PC-9 (cell line): ENCODE measurements at regions of chr9 and their contacts with region 1.

Region 1: DNA sequence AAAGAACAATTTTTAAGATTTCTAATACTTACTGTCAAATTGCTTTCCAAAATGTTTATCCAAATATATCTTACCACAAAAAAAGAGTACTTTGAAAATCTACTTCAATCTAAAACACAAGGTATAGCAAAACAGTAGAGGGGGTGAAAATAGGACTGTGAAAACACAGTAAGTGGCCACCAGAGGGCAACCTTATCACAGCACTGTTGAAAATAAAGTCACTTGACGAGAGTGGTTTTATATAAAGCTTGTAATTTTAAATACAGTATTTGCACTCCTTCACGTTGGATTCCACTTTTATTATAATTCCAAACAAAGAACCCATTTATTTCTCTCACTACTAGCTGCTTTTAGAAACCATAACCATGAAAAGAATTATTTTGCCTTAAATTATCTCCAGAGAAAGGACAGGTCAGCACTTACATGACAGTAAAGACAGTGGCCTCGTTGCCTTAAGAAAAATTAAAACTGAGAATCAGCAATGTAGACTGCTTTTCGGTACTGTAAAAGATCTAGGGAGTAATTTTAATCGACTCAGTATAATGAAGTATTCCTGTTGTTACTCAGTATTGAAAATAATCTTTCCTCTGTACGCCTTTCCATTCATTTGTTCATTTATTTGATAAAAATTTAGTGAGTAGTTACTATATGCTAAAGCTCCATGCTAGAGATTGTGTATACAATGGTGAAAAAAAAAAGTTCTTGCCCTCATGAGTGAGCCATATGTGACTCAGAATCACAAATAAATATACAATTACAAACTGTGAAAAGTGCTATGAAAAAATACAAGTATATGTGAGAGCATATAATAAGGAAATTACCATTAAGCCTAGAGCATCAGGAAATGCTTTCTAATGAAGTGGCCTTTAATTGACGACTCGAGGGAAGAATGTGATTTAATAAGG is 40.0 kb upstream of the CDK5RAP2 start:
- DNase-seq: peak; percentile 49
- H3K4me3 ChIP-seq: no peak overlapping the region
- H3K27ac ChIP-seq: peak overlapping the region; percentile 41
- H3K4me1 ChIP-seq: peaks cover 20% of the 10 kb centered on the region
- H3K27me3 ChIP-seq: no peaks in the 10 kb centered on the region
- CTCF ChIP-seq: peak; percentile 89

Region 2: GRCh38 chr9:120299785-120300184 is 320.2 kb before region 1 on chr9:
- CTCF ChIA-PET with region 1: no interaction called
- POLR2A ChIA-PET with region 1: no interaction called
- intact Hi-C with region 1: no loop called
- DNase-seq: no peak
- H3K4me3 ChIP-seq: no peak overlapping the region
- H3K27ac ChIP-seq: no peak overlapping the region
- H3K4me1 ChIP-seq: no peaks in the 10 kb centered on the region
- H3K27me3 ChIP-seq: peaks cover 40% of the 10 kb centered on the region
- CTCF ChIP-seq: peak; percentile 25; the same call in 1 of the 2 replicates

Region 3: DNA sequence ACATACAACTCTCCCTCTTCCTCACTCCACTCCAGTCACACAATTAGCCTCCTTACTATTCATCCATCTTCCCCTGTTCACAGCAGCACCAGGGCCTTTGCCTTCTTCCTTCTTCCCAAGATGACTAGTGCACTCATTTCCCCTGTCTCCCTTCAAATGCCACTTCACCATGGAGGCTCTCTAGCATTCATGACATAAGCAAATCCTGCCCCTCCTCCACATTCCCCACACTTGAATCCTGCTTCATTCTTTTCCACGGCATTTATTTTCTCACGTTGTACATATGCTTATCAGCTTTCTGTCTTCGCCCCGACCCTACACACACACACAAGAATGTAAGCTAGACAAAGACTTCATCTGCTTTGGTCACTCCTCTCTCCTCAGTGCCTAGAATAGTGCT is 173.3 kb before region 1 on chr9:
- CTCF ChIA-PET with region 1: no interaction called
- POLR2A ChIA-PET with region 1: no interaction called
- intact Hi-C with region 1: no loop called
- DNase-seq: no peak
- H3K4me3 ChIP-seq: no peak overlapping the region
- H3K27ac ChIP-seq: no peak overlapping the region
- H3K4me1 ChIP-seq: no peaks in the 10 kb centered on the region
- H3K27me3 ChIP-seq: no peaks in the 10 kb centered on the region
- CTCF ChIP-seq: no peak

Region 4: DNA sequence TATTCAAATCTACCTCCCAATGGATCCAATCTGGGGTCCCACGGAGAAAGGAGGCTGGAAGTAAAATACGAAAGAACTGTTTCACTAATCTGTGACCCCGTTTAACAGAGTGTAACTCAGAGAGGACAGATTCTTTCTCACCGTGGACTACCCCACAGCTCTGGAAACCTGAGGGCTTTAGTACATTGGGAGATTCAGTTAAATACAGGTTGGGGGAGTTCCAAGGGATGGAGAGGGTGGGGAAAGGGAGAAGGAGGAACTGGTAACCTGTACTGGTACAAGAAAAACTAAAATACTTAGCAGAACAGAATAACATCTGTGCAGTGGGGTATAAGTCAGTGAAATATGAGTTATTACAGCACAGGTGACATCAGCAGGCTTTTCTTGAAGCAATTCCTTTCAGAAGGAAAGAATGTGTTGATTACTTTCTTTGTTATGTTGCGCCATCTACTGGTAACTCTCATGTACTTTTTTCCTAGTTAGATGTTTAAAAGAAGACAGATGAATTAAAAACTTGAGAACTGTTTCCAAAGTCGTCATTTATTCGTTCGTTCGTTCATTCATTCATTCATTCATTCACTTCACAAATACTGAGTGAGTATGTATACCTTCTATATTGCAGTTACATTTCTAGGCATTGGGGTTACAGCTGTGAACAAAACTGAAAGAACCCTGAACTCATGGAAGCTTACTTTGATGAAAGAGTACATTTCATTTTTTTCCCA is 780.0 kb after region 1 on chr9:
- CTCF ChIA-PET with region 1: no interaction called
- POLR2A ChIA-PET with region 1: no interaction called
- intact Hi-C with region 1: loop called (anchors 10 kb)
- DNase-seq: peak in 1 of 2 experiments; percentile 68
- H3K4me3 ChIP-seq: no peak overlapping the region
- H3K27ac ChIP-seq: no peak overlapping the region
- H3K4me1 ChIP-seq: no peaks in the 10 kb centered on the region
- H3K27me3 ChIP-seq: no peaks in the 10 kb centered on the region
- CTCF ChIP-seq: peak; percentile 80